Naive thymus-derived CD4-positive, alpha-beta T cell (primary cell): ENCODE measurements at regions of chr22 and their contacts with region 1.

Region 1: GRCh38 chr22:41697126-41697775 is 2.1 kb upstream of the MEI1 start:
- DNase-seq: peak; percentile 73 to 94 (median 84)
- ATAC-seq: peak; percentile 91
- H3K4me3 ChIP-seq: peak overlapping the region; percentile 44
- H3K4me3 Mint-ChIP-seq: peak overlapping the region; percentile 44 to 80 (median 68)
- H3K27ac ChIP-seq: peak overlapping the region; percentile 5
- H3K27ac Mint-ChIP-seq: peak overlapping the region; percentile 16 to 90 (median 85)
- H3K4me1 ChIP-seq: peaks cover 7 to 10% of the 10 kb centered on the region in 2 donors
- H3K4me1 Mint-ChIP-seq: peaks cover 10 to 16% (median 13%) of the 10 kb centered on the region in 7 donors
- H3K27me3 ChIP-seq: no peaks in the 10 kb centered on the region
- H3K27me3 Mint-ChIP-seq: peaks cover 0 to 3% (median 0%) of the 10 kb centered on the region in 5 donors

Region 2: GRCh38 chr22:41746567-41747400 is 49.5 kb after region 1 on chr22:
- CTCF ChIA-PET with region 1: interaction called, 13 read pairs
- POLR2A ChIA-PET with region 1: interaction called, 4 read pairs
- intact Hi-C with region 1: no loop called
- DNase-seq: peak; percentile 23 to 65 (median 52)
- ATAC-seq: peak; percentile 92
- H3K4me3 ChIP-seq: no peak overlapping the region
- H3K4me3 Mint-ChIP-seq: no peak overlapping the region
- H3K27ac ChIP-seq: no peak overlapping the region
- H3K27ac Mint-ChIP-seq: peak overlapping the region in 2 of 9 donors; percentile 2 to 36
- H3K4me1 ChIP-seq: no peaks in the 10 kb centered on the region
- H3K4me1 Mint-ChIP-seq: peaks cover 0 to 6% (median 0%) of the 10 kb centered on the region in 7 donors
- H3K27me3 ChIP-seq: no peaks in the 10 kb centered on the region
- H3K27me3 Mint-ChIP-seq: peaks cover 0 to 48% (median 0%) of the 10 kb centered on the region in 5 donors

Region 3: GRCh38 chr22:41822317-41823060 is 125.2 kb after region 1 on chr22:
- CTCF ChIA-PET with region 1: interaction called, 6 read pairs
- POLR2A ChIA-PET with region 1: interaction called, 3 read pairs
- intact Hi-C with region 1: loop called in 1 of 2 experiments (anchors 1 kb)
- DNase-seq: peak in 8 of 9 donors; percentile 30 to 78 (median 70)
- ATAC-seq: peak; percentile 87
- H3K4me3 ChIP-seq: no peak overlapping the region
- H3K4me3 Mint-ChIP-seq: no peak overlapping the region
- H3K27ac ChIP-seq: peak overlapping the region; percentile 4
- H3K27ac Mint-ChIP-seq: peak overlapping the region; percentile 35 to 90 (median 76)
- H3K4me1 ChIP-seq: no peaks in the 10 kb centered on the region
- H3K4me1 Mint-ChIP-seq: peaks cover 5 to 33% (median 15%) of the 10 kb centered on the region in 7 donors
- H3K27me3 ChIP-seq: no peaks in the 10 kb centered on the region
- H3K27me3 Mint-ChIP-seq: no peaks in the 10 kb centered on the region

Region 4: GRCh38 chr22:41946629-41947423 is 249.6 kb after region 1 on chr22 and contains the start of gene CENPM:
- CTCF ChIA-PET with region 1: interaction called, 14 read pairs
- POLR2A ChIA-PET with region 1: interaction called, 23 read pairs
- intact Hi-C with region 1: no loop called
- DNase-seq: peak; percentile 71 to 94 (median 84)
- ATAC-seq: peak; percentile 97
- H3K4me3 ChIP-seq: peak within 1 kb of the TSS; percentile 82
- H3K4me3 Mint-ChIP-seq: peak within 1 kb of the TSS; percentile 83 to 93 (median 91)
- H3K27ac ChIP-seq: peak within 1 kb of the TSS; percentile 37
- H3K27ac Mint-ChIP-seq: peak within 1 kb of the TSS in 7 of 9 donors; percentile 63 to 93 (median 68)
- H3K4me1 ChIP-seq: peaks cover 3 to 13% of the 10 kb centered on the region in 2 donors
- H3K4me1 Mint-ChIP-seq: peaks cover 0 to 41% (median 10%) of the 10 kb centered on the region in 7 donors
- H3K27me3 ChIP-seq: no peaks in the 10 kb centered on the region
- H3K27me3 Mint-ChIP-seq: no peaks in the 10 kb centered on the region
- total RNA-seq, gene CENPM: 5.1 to 51.1 (median 10.8) TPM

Region 5: DNA sequence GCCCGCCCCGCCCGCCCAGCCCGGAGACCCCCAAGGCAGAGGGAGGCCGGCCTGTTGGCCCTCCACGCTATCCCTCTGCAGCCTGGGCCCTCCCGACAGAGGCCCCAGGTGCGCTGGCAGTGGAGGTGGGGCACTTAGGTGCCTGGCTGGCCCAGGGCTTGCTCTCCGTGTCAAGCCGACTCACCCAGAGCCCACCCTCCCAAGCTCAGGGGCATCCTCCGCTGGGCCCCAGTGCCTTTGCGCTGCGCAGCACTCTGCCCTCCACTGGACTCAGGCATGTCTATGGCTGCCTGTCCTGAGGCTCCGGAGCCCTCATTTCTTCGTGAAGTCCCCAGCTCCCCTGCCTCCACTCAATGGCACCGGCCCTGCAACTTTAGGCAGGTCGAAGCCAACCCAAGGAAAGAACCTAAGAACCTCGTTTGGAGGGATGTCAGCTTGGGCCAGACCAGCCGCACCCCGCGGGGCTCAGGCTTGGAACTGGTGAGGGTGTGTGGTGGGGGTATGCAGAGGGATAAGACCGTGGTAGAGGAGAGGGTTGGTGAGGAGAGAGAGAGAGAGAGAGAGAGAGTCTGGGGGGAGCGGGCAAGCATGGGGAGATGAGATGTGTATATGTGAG is 260.8 kb after region 1 on chr22:
- CTCF ChIA-PET with region 1: interaction called, 14 read pairs
- POLR2A ChIA-PET with region 1: no interaction called
- intact Hi-C with region 1: loop called in 1 of 2 experiments (anchors 1 kb)
- DNase-seq: peak in 2 of 9 donors; percentile 23 to 28
- ATAC-seq: peak; percentile 50
- H3K4me3 ChIP-seq: no peak overlapping the region
- H3K4me3 Mint-ChIP-seq: peak overlapping the region in 6 of 10 donors; percentile 3 to 67 (median 50)
- H3K27ac ChIP-seq: no peak overlapping the region
- H3K27ac Mint-ChIP-seq: no peak overlapping the region
- H3K4me1 ChIP-seq: peaks cover 3 to 4% of the 10 kb centered on the region in 2 donors
- H3K4me1 Mint-ChIP-seq: peaks cover 0 to 5% (median 4%) of the 10 kb centered on the region in 7 donors
- H3K27me3 ChIP-seq: no peaks in the 10 kb centered on the region
- H3K27me3 Mint-ChIP-seq: peaks cover 0 to 1% (median 0%) of the 10 kb centered on the region in 5 donors